Calu3 (cell line): ENCODE measurements at regions of chr20 and their contacts with region 1.

Region 1: GRCh38 chr20:38645980-38646858 is 44.6 kb downstream of the ARHGAP40 start:
- DNase-seq: peak; percentile 95
- H3K4me3 Mint-ChIP-seq: peak overlapping the region; percentile 59
- H3K27ac Mint-ChIP-seq: no peak overlapping the region
- H3K4me1 Mint-ChIP-seq: no peaks in the 10 kb centered on the region
- H3K27me3 Mint-ChIP-seq: no peaks in the 10 kb centered on the region
- CTCF ChIP-seq: peak; percentile 99

Region 2: GRCh38 chr20:38460040-38460623 is 186.1 kb before region 1 on chr20:
- CTCF ChIA-PET with region 1: no interaction called
- intact Hi-C with region 1: no loop called
- DNase-seq: peak; percentile 85
- H3K4me3 Mint-ChIP-seq: peak overlapping the region; percentile 51
- H3K27ac Mint-ChIP-seq: peak overlapping the region; percentile 79
- H3K4me1 Mint-ChIP-seq: peaks cover 19% of the 10 kb centered on the region
- H3K27me3 Mint-ChIP-seq: peaks cover 13% of the 10 kb centered on the region
- CTCF ChIP-seq: no peak

Region 3: GRCh38 chr20:38730989-38731737 is 84.9 kb after region 1 on chr20:
- CTCF ChIA-PET with region 1: interaction called, 4 read pairs
- intact Hi-C with region 1: loop called (anchors 5 kb)
- DNase-seq: peak; percentile 92
- H3K4me3 Mint-ChIP-seq: peak overlapping the region; percentile 58
- H3K27ac Mint-ChIP-seq: no peak overlapping the region
- H3K4me1 Mint-ChIP-seq: peaks cover 22% of the 10 kb centered on the region
- H3K27me3 Mint-ChIP-seq: peaks cover 100% of the 10 kb centered on the region
- CTCF ChIP-seq: peak; percentile 100

Region 4: GRCh38 chr20:38751360-38751976 is 105.2 kb after region 1 on chr20:
- CTCF ChIA-PET with region 1: interaction called, 5 read pairs
- intact Hi-C with region 1: loop called (anchors 1 kb)
- DNase-seq: peak; percentile 52
- H3K4me3 Mint-ChIP-seq: no peak overlapping the region
- H3K27ac Mint-ChIP-seq: no peak overlapping the region
- H3K4me1 Mint-ChIP-seq: peaks cover 21% of the 10 kb centered on the region
- H3K27me3 Mint-ChIP-seq: no peaks in the 10 kb centered on the region
- CTCF ChIP-seq: peak; percentile 57